WTC11 (cell line): ENCODE measurements at regions of chr17 and their contacts with region 1.

Region 1: GRCh38 chr17:3738562-3739295 is 15.0 kb downstream of the HASPIN start:
- DNase-seq: no peak
- ATAC-seq: peak; percentile 14; the same call in 1 of the 2 replicates
- H3K4me3 Mint-ChIP-seq: peak overlapping the region; percentile 45; the same call in 1 of the 2 replicates
- H3K27ac Mint-ChIP-seq: no peak overlapping the region
- H3K4me1 Mint-ChIP-seq: peaks cover 22% of the 10 kb centered on the region
- H3K27me3 Mint-ChIP-seq: no peaks in the 10 kb centered on the region
- CTCF ChIP-seq: no peak

Region 2: DNA sequence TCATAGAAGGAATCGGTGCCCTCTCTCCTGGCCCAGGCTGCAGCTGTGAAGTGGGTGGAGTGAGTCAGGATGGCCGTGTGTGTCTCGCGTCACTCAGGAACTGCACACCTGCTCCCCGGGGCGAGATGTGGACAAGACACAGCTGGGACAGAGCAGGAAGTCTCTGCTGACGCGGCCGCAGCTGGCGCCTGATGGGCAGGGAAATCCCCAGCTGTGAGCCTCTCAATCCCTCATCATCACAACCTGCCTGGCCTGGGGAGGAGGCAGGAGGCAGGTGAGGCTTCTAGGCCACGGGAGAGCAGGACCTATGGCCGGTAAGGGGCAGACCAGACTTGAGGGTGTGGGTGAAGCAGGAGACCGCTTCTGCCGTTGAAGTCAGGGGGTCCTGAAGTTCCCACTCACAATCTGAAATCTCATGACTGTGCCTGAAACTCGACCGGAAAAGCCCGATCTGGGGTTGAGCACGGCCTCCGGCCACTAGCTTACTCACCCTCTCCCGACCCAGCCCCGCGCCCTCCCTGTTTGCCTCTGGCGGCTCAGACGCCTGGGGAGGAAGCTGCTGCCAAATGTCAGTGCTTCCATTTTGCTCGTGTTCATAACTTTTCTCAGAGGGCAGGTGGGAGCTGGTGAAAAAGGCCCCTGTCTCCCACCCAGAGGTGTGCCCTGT is 180.0 kb before region 1 on chr17:
- CTCF ChIA-PET with region 1: no interaction called
- POLR2A ChIA-PET with region 1: no interaction called
- DNase-seq: no peak
- ATAC-seq: no peak; the same call in 1 of the 2 replicates
- H3K4me3 Mint-ChIP-seq: no peak overlapping the region
- H3K27ac Mint-ChIP-seq: peak overlapping the region; percentile 28
- H3K4me1 Mint-ChIP-seq: no peaks in the 10 kb centered on the region
- H3K27me3 Mint-ChIP-seq: no peaks in the 10 kb centered on the region
- CTCF ChIP-seq: no peak

Region 3: GRCh38 chr17:3695723-3696411 is 42.9 kb before region 1 on chr17 and contains the start of gene P2RX5:
- CTCF ChIA-PET with region 1: interaction called, 16 read pairs
- POLR2A ChIA-PET with region 1: no interaction called
- DNase-seq: peak; percentile 58
- ATAC-seq: peak; percentile 24
- H3K4me3 Mint-ChIP-seq: peak within 1 kb of the TSS; percentile 75
- H3K27ac Mint-ChIP-seq: no peak within 1 kb of the TSS
- H3K4me1 Mint-ChIP-seq: peaks cover 10% of the 10 kb centered on the region
- H3K27me3 Mint-ChIP-seq: peaks cover 35% of the 10 kb centered on the region
- CTCF ChIP-seq: no peak
- total RNA-seq, gene P2RX5: 6.4 to 9.5 TPM (median 8.8 TPM) in 3 replicates

Region 4: GRCh38 chr17:3762922-3763776 is 24.4 kb after region 1 on chr17:
- CTCF ChIA-PET with region 1: interaction called, 117 read pairs
- POLR2A ChIA-PET with region 1: no interaction called
- DNase-seq: no peak
- ATAC-seq: no peak
- H3K4me3 Mint-ChIP-seq: no peak overlapping the region
- H3K27ac Mint-ChIP-seq: no peak overlapping the region
- H3K4me1 Mint-ChIP-seq: no peaks in the 10 kb centered on the region
- H3K27me3 Mint-ChIP-seq: peaks cover 3% of the 10 kb centered on the region
- CTCF ChIP-seq: no peak

Region 5: GRCh38 chr17:3796110-3796821 is 57.5 kb after region 1 on chr17:
- CTCF ChIA-PET with region 1: interaction called, 76 read pairs
- POLR2A ChIA-PET with region 1: no interaction called
- DNase-seq: no peak
- ATAC-seq: no peak
- H3K4me3 Mint-ChIP-seq: no peak overlapping the region
- H3K27ac Mint-ChIP-seq: no peak overlapping the region
- H3K4me1 Mint-ChIP-seq: 0 out of 2 replicates have a peak, but pooled peaks cover 7% of the 10 kb centered on the region
- H3K27me3 Mint-ChIP-seq: no peaks in the 10 kb centered on the region
- CTCF ChIP-seq: no peak

Region 6: GRCh38 chr17:3815925-3816324 is 77.2 kb after region 1 on chr17:
- CTCF ChIA-PET with region 1: interaction called, 35 read pairs
- POLR2A ChIA-PET with region 1: no interaction called
- DNase-seq: no peak
- ATAC-seq: no peak
- H3K4me3 Mint-ChIP-seq: no peak overlapping the region
- H3K27ac Mint-ChIP-seq: no peak overlapping the region
- H3K4me1 Mint-ChIP-seq: no peaks in the 10 kb centered on the region
- H3K27me3 Mint-ChIP-seq: no peaks in the 10 kb centered on the region
- CTCF ChIP-seq: no peak

Region 7: DNA sequence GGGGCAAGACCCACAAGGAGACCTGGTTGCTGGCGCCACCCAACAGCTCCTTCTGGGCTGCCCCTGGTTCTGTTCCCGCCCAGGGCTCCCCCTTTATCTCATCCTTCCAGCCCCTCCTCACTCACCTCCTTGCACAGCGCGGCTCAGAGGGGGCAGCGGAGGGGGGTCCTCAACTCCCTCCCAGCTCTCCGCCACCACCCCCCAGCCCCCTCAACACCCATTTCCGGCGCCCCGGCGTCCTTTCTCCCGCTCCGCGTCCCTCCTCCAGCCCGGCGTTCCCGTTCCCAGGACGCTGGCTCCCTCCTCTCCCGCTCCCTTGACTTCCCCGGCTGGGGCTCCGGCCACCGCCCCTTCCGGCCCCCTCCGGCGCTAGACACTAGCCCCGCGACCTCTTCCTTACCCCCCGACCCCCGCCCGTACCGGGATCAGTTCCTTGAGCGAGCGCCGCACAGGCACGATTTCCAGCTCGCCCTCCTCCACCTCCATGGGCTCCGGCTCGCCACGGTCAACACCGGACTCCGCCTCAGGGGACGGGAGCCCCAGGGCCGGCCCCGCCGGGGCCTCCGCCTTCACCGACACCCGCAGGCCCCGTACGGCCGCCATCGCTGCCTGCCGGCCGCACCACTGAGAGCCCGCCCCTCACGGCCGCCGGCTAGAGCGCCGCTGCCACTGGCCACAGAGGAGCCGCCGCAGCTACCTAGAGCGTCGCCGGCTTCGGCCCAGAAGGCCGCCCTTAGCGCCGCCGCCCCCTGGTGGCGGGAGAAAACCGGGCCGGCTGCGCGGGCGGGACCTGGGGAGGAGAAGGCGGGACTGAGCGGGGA is 107.1 kb after region 1 on chr17 and contains the start of gene NCBP3:
- CTCF ChIA-PET with region 1: interaction called, 73 read pairs
- POLR2A ChIA-PET with region 1: no interaction called
- DNase-seq: peak; percentile 84
- ATAC-seq: peak; percentile 96
- H3K4me3 Mint-ChIP-seq: peak within 1 kb of the TSS; percentile 93
- H3K27ac Mint-ChIP-seq: peak within 1 kb of the TSS; percentile 93
- H3K4me1 Mint-ChIP-seq: peaks cover 18% of the 10 kb centered on the region
- H3K27me3 Mint-ChIP-seq: no peaks in the 10 kb centered on the region
- CTCF ChIP-seq: peak; percentile 73
- total RNA-seq, gene NCBP3: 48.7 to 51.3 TPM (median 49.6 TPM) in 3 replicates

Region 8: DNA sequence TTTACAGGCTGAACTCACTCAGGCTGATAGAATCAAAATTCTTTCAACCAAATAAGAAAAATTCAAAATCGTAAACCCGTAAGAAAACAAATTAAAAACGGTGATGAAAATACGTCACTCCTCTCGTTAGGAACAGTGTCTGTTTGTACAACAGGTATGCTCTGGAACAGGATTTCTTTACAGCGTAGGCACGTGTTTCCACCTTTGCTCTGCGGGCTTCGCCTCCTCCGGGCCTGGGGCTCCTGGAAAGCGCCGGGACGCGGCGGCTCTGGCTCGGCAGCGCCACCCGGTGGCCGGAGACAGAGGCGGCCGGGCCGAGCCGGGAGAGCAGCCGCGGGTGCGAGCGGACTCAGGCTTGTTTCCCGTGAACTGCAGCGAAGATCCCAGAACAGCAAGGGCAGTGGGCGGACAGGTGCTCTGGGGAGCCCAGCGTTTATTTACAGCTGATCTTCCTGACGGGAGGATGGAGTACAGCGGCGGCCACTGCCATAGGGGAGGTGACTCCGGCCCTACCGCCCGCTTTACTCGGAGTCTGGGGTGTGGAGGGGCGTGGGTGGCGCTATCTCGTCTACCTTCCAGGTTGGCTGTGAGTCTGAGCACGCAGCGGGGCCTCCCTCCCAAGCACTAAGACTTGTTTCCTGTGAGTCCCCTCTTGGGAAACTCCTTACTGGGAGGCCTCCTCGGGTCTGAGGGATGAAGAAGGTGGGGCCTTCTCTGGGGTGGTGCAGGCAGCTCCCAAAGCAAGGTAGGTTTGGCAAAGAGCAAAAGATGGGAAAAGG is 266.0 kb after region 1 on chr17:
- CTCF ChIA-PET with region 1: interaction called, 11 read pairs
- POLR2A ChIA-PET with region 1: no interaction called
- DNase-seq: peak; percentile 78
- ATAC-seq: peak; percentile 67
- H3K4me3 Mint-ChIP-seq: peak overlapping the region; percentile 34
- H3K27ac Mint-ChIP-seq: no peak overlapping the region; the same call in 1 of the 2 replicates
- H3K4me1 Mint-ChIP-seq: peaks cover 22% of the 10 kb centered on the region
- H3K27me3 Mint-ChIP-seq: no peaks in the 10 kb centered on the region
- CTCF ChIP-seq: peak; percentile 96